T-cell (primary cell): ENCODE measurements at regions of chr12 and their contacts with region 1.

Region 1: DNA sequence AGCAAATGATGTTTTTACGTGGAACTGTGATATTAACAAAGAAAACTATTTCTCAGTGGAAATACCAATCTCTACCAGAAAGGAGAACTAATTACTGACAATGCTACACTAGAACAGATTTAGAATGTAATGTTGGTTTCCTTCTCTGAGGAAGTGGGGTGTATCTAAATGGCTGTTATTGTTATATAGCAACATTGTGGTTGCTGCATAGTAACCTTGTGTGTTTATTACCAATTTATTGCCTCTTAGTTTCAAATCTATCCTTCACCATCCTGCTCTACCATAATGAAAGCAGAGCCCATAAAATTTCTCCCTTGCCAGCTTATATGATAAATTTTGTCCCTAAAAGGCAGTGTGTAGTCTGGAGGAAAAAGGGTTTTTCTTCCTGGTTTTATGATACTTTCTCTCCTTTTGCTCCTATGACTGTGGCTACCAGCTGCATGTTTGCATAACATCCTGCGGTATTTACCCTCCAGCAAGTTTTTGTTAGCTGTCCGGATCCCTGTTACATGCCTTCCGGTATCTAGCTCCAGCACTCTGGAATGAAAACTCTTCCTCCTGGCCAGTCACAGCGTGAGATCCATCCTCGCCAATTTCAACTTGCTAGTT is 5.7 kb upstream of the KLRK1 start:
- DNase-seq: peak in 3 of 35 experiments; percentile 16 to 71 (median 36)
- ATAC-seq: peak; percentile 67 to 79 (median 74)
- H3K4me3 ChIP-seq: peak overlapping the region in 1 of 2 donors; percentile 10
- H3K4me3 Mint-ChIP-seq: peak overlapping the region; percentile 25 to 46 (median 34)
- H3K27ac ChIP-seq: peak overlapping the region; percentile 93
- H3K27ac Mint-ChIP-seq: peak overlapping the region; percentile 75 to 94
- H3K4me1 ChIP-seq: peaks cover 21 to 29% of the 10 kb centered on the region in 2 experiments
- H3K4me1 Mint-ChIP-seq: peaks cover 19 to 48% (median 36%) of the 10 kb centered on the region in 3 donors
- H3K27me3 ChIP-seq: no peaks in the 10 kb centered on the region
- H3K27me3 Mint-ChIP-seq: peaks cover 5 to 17% of the 10 kb centered on the region in 2 donors

Region 2: DNA sequence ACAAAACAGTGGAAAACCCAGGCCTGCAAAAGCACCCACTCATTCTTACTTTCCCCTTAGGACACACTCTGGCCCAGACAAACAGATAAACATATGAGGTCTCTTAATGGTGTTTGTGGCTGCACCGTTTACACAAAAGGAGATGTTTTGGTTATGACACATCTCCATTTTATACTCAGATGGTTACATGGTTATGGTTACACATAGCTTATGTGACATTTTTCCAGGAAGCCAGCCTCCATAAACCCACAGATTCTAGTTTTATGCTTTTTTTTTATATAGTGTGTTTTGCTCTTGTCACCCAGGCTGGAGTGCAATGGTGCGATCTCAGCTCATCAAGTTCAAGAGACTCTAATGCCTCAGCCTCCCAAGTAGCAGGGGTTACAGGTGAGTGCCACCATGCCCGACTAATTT is 91.3 kb before region 1 on chr12:
- CTCF ChIA-PET with region 1: interaction called in 1 of 2 experiments, 3 read pairs
- POLR2A ChIA-PET with region 1: interaction called, 3 to 13 read pairs
- DNase-seq: peak in 5 of 35 experiments; percentile 9 to 55 (median 20)
- ATAC-seq: peak in 3 of 4 experiments; percentile 50 to 65 (median 51)
- H3K4me3 ChIP-seq: no peak overlapping the region
- H3K4me3 Mint-ChIP-seq: no peak overlapping the region
- H3K27ac ChIP-seq: peak overlapping the region; percentile 26
- H3K27ac Mint-ChIP-seq: no peak overlapping the region
- H3K4me1 ChIP-seq: peaks cover 5 to 8% of the 10 kb centered on the region in 2 experiments
- H3K4me1 Mint-ChIP-seq: peaks cover 0 to 35% (median 24%) of the 10 kb centered on the region in 3 donors
- H3K27me3 ChIP-seq: no peaks in the 10 kb centered on the region
- H3K27me3 Mint-ChIP-seq: no peaks in the 10 kb centered on the region

Region 3: GRCh38 chr12:10365696-10366405 is 29.6 kb before region 1 on chr12:
- CTCF ChIA-PET with region 1: interaction called, 5 to 6 read pairs
- POLR2A ChIA-PET with region 1: interaction called, 4 to 11 read pairs
- DNase-seq: no peak
- ATAC-seq: no peak
- H3K4me3 ChIP-seq: peak overlapping the region; percentile 57 to 63
- H3K4me3 Mint-ChIP-seq: no peak overlapping the region
- H3K27ac ChIP-seq: peak overlapping the region; percentile 78
- H3K27ac Mint-ChIP-seq: no peak overlapping the region
- H3K4me1 ChIP-seq: peaks cover 22 to 45% of the 10 kb centered on the region in 2 experiments
- H3K4me1 Mint-ChIP-seq: peaks cover 35 to 51% (median 39%) of the 10 kb centered on the region in 3 donors
- H3K27me3 ChIP-seq: no peaks in the 10 kb centered on the region
- H3K27me3 Mint-ChIP-seq: no peaks in the 10 kb centered on the region

Region 4: DNA sequence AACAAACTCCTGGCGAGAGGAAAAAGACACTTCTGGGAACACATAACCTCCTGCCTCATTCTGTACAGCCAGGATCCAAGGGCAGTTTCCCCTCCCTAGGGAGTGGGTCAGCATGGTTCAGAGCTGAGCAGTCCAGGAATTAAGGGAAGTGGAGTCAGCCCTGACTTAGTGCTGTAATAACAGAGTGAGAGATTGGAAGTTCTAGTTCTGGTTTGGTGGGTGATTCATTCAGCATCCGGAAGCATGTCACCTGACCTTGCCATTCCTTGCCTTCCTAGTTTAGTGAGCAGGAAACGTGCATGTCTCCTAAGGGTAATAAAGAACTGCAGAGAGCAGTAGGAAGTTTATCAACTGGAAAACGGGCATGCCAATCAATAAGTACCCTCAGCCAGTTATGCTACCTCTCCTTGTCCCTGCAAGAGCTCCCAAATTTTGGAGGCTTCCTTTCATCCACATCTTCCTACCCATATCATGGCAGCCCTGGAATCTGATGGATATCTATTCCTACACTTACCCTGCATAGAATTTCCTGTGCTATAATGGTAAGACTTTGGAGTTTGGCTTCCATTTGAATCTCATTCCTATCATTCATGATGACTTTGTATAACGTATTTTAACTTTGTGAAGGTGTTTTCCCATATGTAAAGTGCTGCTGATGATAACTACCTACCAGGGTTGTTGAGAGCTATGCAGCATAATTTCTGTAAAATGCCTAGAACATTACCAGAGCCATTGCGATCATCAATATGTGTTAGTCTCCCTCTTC is 246.4 kb after region 1 on chr12:
- CTCF ChIA-PET with region 1: no interaction called
- POLR2A ChIA-PET with region 1: no interaction called
- DNase-seq: no peak
- ATAC-seq: no peak
- H3K4me3 ChIP-seq: no peak overlapping the region
- H3K4me3 Mint-ChIP-seq: no peak overlapping the region
- H3K27ac ChIP-seq: no peak overlapping the region
- H3K27ac Mint-ChIP-seq: no peak overlapping the region
- H3K4me1 ChIP-seq: no peaks in the 10 kb centered on the region
- H3K4me1 Mint-ChIP-seq: no peaks in the 10 kb centered on the region
- H3K27me3 ChIP-seq: no peaks in the 10 kb centered on the region
- H3K27me3 Mint-ChIP-seq: peaks cover 13% of the 10 kb centered on the region in 2 donors